ENCODE measurements at regions of chr2 and their contacts with region 1.

Region 1: DNA sequence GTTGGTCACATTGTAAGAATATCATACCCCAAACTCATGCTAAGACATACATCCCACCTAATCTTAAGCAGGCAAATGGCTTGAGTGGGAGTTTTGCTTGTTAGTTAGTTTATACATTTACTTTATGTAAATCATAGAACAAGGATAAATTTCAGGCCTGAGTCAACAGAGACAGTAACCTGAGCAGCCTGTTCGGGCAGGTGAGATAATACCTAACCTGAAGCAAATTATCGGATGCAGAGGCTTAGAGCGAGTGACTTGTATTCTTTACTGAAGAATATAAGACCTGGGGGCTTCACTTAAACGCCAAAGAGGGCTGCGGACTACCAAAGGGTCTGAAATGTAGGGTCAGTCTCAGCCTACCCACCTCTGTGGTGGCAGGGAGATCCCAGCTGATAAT is 269.5 kb upstream of the ZC3H15 start:
- DNase-seq: no peak
- H3K4me3 ChIP-seq: no peak overlapping the region
- H3K27ac ChIP-seq: no peak overlapping the region
- H3K4me1 ChIP-seq: no peaks in the 10 kb centered on the region
- H3K27me3 ChIP-seq: no peaks in the 10 kb centered on the region
- CTCF ChIP-seq: no peak
- POLR2A ChIP-seq: no peak

Region 2: GRCh38 chr2:186044761-186045160 is 171.8 kb before region 1 on chr2:
- intact Hi-C with region 1: no loop called
- DNase-seq: no peak
- H3K4me3 ChIP-seq: no peak overlapping the region
- H3K27ac ChIP-seq: no peak overlapping the region
- H3K4me1 ChIP-seq: no peaks in the 10 kb centered on the region
- H3K27me3 ChIP-seq: no peaks in the 10 kb centered on the region
- CTCF ChIP-seq: no peak
- POLR2A ChIP-seq: no peak

Region 3: DNA sequence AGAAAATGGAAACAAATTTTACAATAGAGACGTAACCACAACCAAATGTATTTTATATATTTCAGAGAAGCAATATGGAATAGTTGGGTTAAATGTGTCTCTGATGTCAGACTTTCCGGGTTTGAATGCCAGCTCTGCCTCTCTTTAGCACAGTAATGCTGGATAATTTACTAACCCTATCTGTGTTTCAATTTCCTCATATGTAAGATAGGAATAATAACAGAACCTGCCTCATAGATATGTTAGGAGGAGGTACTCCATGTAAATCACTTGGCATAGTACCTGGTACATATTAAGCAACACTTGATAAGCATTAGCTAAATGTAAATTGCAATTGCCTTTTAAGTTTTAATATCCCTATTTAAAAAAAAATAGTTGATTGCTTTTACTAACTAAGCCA is 38.2 kb after region 1 on chr2:
- intact Hi-C with region 1: loop called (anchors 1 kb)
- DNase-seq: no peak
- H3K4me3 ChIP-seq: no peak overlapping the region
- H3K27ac ChIP-seq: no peak overlapping the region
- H3K4me1 ChIP-seq: no peaks in the 10 kb centered on the region
- H3K27me3 ChIP-seq: no peaks in the 10 kb centered on the region
- CTCF ChIP-seq: no peak
- POLR2A ChIP-seq: no peak

Region 4: DNA sequence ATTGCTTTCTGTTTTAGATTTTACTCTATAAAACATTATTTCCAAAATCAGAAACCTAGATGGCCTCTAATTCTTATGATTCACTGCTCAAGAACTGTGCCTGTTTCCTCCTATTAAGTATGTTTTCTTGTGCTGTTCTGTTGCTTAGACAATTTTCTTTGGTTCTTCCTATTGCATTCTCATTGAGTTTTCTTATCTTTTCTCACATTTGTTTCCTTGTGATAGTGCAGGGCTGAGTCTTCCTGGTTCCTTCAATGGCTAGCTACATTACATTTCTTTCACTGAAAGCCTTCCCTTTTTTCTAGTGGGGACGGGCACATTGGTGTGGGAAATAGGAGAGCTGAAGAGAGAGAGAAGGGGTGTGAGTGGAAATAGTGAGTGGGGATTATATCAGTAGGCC is 1048.1 kb after region 1 on chr2:
- intact Hi-C with region 1: loop called (anchors 5 kb)
- DNase-seq: no peak
- H3K4me3 ChIP-seq: no peak overlapping the region
- H3K27ac ChIP-seq: no peak overlapping the region
- H3K4me1 ChIP-seq: no peaks in the 10 kb centered on the region
- H3K27me3 ChIP-seq: no peaks in the 10 kb centered on the region
- CTCF ChIP-seq: no peak
- POLR2A ChIP-seq: no peak

Measured in vagina (tissue), 2 donors.